B cell (primary cell): ENCODE measurements at regions of chr2 and their contacts with region 1.

Region 1: DNA sequence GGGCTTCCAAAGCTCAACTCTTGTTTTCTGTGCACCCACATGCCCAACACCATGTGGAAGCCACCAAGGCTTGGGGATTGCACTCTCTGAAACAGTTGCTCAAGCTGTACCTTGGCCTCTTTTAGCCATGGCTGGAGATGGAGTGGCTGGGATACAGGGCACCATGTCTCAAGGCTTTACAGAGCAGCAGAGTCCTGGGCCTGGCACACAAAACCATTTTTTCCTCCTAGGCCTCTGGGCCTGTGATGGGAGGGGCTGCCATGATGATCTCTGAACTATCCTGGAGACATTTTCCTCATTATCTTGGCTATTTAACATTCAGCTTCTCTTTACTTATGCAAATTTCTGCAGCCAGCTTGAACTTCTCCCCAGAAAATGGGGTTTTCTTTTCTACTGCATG is 179.7 kb upstream of the LRP1B start:
- DNase-seq: no peak
- ATAC-seq: no peak
- H3K4me3 ChIP-seq: no peak overlapping the region
- H3K4me3 Mint-ChIP-seq: no peak overlapping the region
- H3K27ac ChIP-seq: no peak overlapping the region
- H3K27ac Mint-ChIP-seq: no peak overlapping the region
- H3K4me1 ChIP-seq: no peaks in the 10 kb centered on the region
- H3K4me1 Mint-ChIP-seq: no peaks in the 10 kb centered on the region
- H3K27me3 ChIP-seq: no peaks in the 10 kb centered on the region
- H3K27me3 Mint-ChIP-seq: no peaks in the 10 kb centered on the region
- CTCF ChIP-seq: no peak

Region 2: GRCh38 chr2:142220901-142221300 is 89.6 kb before region 1 on chr2:
- CTCF ChIA-PET with region 1: no interaction called
- POLR2A ChIA-PET with region 1: interaction called, 11 read pairs
- intact Hi-C with region 1: no loop called
- DNase-seq: no peak
- ATAC-seq: no peak
- H3K4me3 ChIP-seq: no peak overlapping the region
- H3K4me3 Mint-ChIP-seq: no peak overlapping the region
- H3K27ac ChIP-seq: no peak overlapping the region
- H3K27ac Mint-ChIP-seq: no peak overlapping the region
- H3K4me1 ChIP-seq: no peaks in the 10 kb centered on the region
- H3K4me1 Mint-ChIP-seq: no peaks in the 10 kb centered on the region
- H3K27me3 ChIP-seq: no peaks in the 10 kb centered on the region
- H3K27me3 Mint-ChIP-seq: no peaks in the 10 kb centered on the region
- CTCF ChIP-seq: no peak

Region 3: DNA sequence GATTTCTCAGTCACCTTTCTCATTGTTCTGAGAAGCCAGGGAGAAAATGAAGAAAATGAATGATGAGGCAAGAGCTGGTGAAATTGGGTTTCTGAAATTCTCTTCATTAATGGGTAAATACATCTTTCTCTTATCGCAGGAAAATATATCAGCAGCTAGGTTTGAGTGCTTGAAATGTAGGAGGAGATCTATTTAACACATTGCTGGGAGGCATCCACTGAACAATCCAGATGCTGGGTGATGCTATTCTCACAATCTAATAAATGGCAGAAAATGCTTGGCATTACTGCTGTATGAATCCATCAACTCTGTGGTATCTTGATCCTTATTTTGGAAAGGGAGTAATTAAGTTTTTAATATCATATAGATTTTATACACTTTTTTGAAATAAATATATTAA is 19.9 kb after region 1 on chr2:
- CTCF ChIA-PET with region 1: no interaction called
- POLR2A ChIA-PET with region 1: no interaction called
- intact Hi-C with region 1: no loop called
- DNase-seq: no peak
- ATAC-seq: no peak
- H3K4me3 ChIP-seq: no peak overlapping the region
- H3K4me3 Mint-ChIP-seq: no peak overlapping the region
- H3K27ac ChIP-seq: no peak overlapping the region
- H3K27ac Mint-ChIP-seq: no peak overlapping the region
- H3K4me1 ChIP-seq: no peaks in the 10 kb centered on the region
- H3K4me1 Mint-ChIP-seq: no peaks in the 10 kb centered on the region
- H3K27me3 ChIP-seq: no peaks in the 10 kb centered on the region
- H3K27me3 Mint-ChIP-seq: no peaks in the 10 kb centered on the region
- CTCF ChIP-seq: no peak